AG04449 (cell line): ENCODE measurements at regions of chr3 and their contacts with region 1.

Region 1: GRCh38 chr3:58532794-58533220 is 4.2 kb downstream of the ACOX2 start:
- DNase-seq: no peak
- H3K4me3 ChIP-seq: no peak overlapping the region
- CTCF ChIP-seq: peak; percentile 93

Region 2: DNA sequence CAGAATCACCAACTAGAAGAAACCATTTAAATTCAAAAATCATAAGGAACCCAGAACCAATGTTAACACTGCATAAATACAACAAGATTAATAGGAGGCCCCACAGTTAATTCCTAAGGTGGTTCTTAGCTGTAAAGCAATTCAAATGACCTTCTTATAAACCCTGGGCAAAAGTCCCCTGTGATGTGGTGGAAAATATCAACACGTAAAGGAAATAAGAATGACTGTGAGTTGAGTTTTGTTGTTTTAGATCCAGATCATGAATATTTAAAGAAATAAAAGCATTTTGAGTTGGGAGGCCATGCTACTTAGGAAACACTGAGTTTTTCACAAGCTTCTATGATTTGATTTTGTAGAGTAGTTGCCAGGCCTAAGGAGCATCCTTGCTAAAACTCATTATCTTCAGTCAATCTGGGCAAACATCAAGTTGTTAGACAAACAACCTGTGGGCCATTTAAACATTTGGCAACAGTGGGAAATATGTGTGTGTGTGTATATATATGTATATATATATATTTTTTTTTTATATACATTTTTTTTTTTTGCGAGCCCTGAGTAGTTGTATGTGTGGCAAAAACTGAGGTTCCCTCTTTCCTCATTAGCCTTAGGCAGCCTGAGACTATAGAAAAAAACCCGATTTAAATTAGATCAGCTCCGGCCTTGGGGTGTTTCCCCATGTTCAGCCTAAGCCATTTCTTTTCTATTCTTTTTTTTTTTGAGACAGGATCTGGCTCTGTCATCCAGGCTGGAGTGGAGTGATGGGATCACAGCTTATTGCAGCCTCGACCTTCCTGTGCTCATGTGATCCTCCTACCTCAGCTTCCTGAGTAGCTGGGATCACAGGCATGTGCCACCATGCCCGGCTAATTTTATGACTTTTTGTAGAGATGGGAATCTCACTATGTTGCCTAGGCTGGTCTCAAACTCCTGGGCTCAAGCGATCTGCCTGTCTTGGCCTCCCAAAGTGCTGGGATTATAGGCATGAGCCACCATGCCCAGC is 208.1 kb before region 1 on chr3:
- CTCF ChIA-PET with region 1: interaction called, 95 read pairs
- POLR2A ChIA-PET with region 1: no interaction called
- DNase-seq: no peak
- H3K4me3 ChIP-seq: no peak overlapping the region
- CTCF ChIP-seq: no peak

Region 3: GRCh38 chr3:58419780-58420507 is 112.9 kb before region 1 on chr3:
- CTCF ChIA-PET with region 1: interaction called, 35 read pairs
- POLR2A ChIA-PET with region 1: no interaction called
- DNase-seq: no peak
- H3K4me3 ChIP-seq: no peak overlapping the region
- CTCF ChIP-seq: no peak

Region 4: GRCh38 chr3:58433400-58434169 is 99.2 kb before region 1 on chr3 and contains the start of gene PDHB:
- CTCF ChIA-PET with region 1: interaction called, 14 read pairs
- POLR2A ChIA-PET with region 1: no interaction called
- DNase-seq: no peak
- H3K4me3 ChIP-seq: peak within 1 kb of the TSS; percentile 94
- CTCF ChIP-seq: no peak

Region 5: GRCh38 chr3:58452176-58452575 is 80.6 kb before region 1 on chr3:
- CTCF ChIA-PET with region 1: no interaction called
- POLR2A ChIA-PET with region 1: no interaction called
- DNase-seq: no peak
- H3K4me3 ChIP-seq: no peak overlapping the region
- CTCF ChIP-seq: no peak

Region 6: DNA sequence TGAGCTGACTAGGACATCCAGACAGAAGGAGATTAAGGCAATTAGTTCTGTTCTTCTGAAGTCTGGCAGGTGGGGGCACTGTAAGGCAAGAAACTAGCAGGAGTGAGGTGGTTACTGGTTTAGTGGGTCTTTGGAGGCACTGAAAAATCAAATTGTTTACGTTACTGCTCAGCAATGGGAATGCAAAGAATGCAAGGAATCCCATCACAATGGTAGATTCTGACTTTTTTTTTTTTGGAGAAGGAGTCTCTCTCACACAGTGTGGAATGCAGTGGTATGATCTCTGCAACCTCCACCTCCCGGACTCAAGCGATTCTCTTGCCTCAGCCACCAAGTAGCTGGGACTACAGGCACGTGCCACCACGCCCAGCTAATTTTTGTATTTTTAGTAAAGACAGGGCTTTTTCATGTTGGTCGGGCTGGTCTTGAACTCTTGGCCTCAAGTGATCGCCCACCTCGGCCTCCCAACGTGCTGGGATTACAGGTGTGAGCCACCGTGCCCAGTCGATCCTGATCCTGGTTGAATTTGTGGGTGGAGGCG is 28.0 kb after region 1 on chr3:
- CTCF ChIA-PET with region 1: interaction called, 13 read pairs
- POLR2A ChIA-PET with region 1: no interaction called
- DNase-seq: peak; percentile 94
- H3K4me3 ChIP-seq: no peak overlapping the region
- CTCF ChIP-seq: peak; percentile 65

Region 7: GRCh38 chr3:58666683-58667082 is 133.9 kb after region 1 on chr3 and contains the start of gene FAM3D:
- CTCF ChIA-PET with region 1: no interaction called
- POLR2A ChIA-PET with region 1: no interaction called
- DNase-seq: no peak
- H3K4me3 ChIP-seq: no peak within 1 kb of the TSS
- CTCF ChIP-seq: no peak

Region 8: DNA sequence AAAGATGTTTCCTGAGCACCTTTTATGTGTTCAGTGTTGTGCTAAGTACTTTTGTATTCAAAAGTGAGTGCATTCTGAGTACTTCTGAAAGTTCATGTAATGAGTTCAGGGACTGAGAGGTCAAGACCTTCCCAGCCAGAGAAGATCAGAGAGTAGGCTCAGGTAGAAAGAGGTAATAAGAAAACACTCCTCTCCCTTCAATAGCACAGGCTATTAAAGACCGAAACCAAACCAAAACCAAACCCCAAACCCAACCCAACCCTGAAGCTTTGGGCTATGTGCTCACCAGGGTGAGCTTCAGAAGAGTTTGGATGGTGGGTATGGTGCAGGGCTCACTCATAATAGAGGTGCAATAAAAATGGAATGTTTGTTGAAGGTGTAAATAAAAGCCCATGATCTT is 210.5 kb after region 1 on chr3:
- CTCF ChIA-PET with region 1: no interaction called
- POLR2A ChIA-PET with region 1: no interaction called
- DNase-seq: no peak
- H3K4me3 ChIP-seq: no peak overlapping the region
- CTCF ChIP-seq: no peak